ENCODE measurements at regions of chr2 and their contacts with region 1.

Region 1: GRCh38 chr2:129396980-129397599 is 582.4 kb upstream of the RAB6C start:
- DNase-seq: peak; percentile 54
- H3K4me3 ChIP-seq: no peak overlapping the region
- H3K27ac ChIP-seq: no peak overlapping the region
- H3K4me1 ChIP-seq: no peaks in the 10 kb centered on the region
- H3K27me3 ChIP-seq: no peaks in the 10 kb centered on the region
- CTCF ChIP-seq: peak; percentile 82

Region 2: DNA sequence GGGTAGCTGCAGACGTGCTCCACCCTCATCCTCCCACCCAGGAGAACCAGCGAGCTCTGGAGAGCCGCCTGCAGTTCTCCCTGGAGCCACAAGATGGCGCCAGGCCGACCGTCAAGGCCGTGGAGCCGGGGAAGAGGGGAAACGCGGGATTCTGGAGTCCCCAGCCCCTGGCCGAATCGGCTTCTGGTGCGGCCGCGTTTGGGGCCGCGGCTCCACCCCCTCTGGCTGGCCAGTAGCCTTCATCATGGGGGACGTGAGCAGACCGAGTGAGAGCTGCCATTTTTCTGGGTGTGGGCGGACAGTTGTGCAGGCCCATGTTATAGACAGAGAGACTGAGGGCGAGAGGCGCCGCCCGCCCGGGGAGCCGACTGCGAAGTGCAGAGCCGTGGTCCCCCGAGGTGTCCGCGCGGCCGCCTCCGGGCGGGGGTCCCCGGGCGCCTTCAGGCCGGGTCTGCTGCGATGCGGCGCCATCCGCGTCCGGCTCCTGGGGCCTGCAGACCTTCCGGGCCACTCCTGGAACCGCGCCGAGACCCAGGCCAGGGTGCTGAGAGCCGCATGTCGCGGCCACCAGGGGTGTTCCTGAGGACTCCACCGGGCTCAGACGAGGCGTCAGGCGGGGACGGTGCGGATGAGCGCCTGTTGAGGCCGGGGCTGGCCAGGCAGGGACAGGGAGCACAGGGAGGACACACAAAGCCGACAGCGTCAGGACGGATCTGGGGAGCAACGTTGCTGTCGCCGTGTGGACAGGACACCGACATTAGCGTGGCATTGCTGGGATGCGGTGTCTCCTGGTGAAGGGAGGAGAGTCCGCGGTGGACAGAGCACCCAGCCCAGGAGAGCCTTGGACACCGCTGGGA is 660.2 kb before region 1 on chr2:
- CTCF ChIA-PET with region 1: no interaction called
- POLR2A ChIA-PET with region 1: no interaction called
- intact Hi-C with region 1: loop called (anchors 10 kb)
- DNase-seq: peak; percentile 90
- H3K4me3 ChIP-seq: no peak overlapping the region
- H3K27ac ChIP-seq: no peak overlapping the region
- H3K4me1 ChIP-seq: peaks cover 32% of the 10 kb centered on the region
- H3K27me3 ChIP-seq: no peaks in the 10 kb centered on the region
- CTCF ChIP-seq: peak; percentile 99

Region 3: GRCh38 chr2:129191235-129191929 is 205.7 kb before region 1 on chr2:
- CTCF ChIA-PET with region 1: no interaction called
- POLR2A ChIA-PET with region 1: no interaction called
- intact Hi-C with region 1: loop called (anchors 2 kb)
- DNase-seq: no peak
- H3K4me3 ChIP-seq: no peak overlapping the region
- H3K27ac ChIP-seq: no peak overlapping the region
- H3K4me1 ChIP-seq: no peaks in the 10 kb centered on the region
- H3K27me3 ChIP-seq: peaks cover under 1% of the 10 kb centered on the region
- CTCF ChIP-seq: no peak

Region 4: DNA sequence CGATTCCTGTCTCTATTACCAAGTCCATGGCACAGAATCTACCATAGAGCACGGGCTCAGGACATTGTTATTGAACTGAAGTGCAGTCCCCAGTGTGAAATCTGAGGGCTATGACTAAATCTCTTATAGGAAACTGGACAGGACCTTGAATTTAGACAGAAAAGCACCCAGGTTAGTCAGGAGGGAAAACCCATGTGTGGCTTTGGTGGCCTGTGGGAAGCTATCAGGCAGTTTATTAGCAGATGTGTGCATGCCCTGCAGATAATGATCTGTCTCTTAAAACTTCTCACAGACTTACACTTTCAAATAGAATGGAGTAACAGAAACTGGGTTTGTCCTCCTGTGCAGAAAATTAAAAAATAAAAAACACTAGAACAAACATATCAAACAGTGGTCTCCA is 27.7 kb before region 1 on chr2:
- CTCF ChIA-PET with region 1: interaction called, 14 read pairs
- POLR2A ChIA-PET with region 1: no interaction called
- intact Hi-C with region 1: no loop called
- DNase-seq: no peak
- H3K4me3 ChIP-seq: no peak overlapping the region
- H3K27ac ChIP-seq: no peak overlapping the region
- H3K4me1 ChIP-seq: no peaks in the 10 kb centered on the region
- H3K27me3 ChIP-seq: no peaks in the 10 kb centered on the region
- CTCF ChIP-seq: no peak

Region 5: GRCh38 chr2:129849559-129850160 is 452.6 kb after region 1 on chr2:
- CTCF ChIA-PET with region 1: no interaction called
- POLR2A ChIA-PET with region 1: no interaction called
- intact Hi-C with region 1: loop called (anchors 10 kb)
- DNase-seq: peak; percentile 76
- H3K4me3 ChIP-seq: no peak overlapping the region
- H3K27ac ChIP-seq: no peak overlapping the region
- H3K4me1 ChIP-seq: no peaks in the 10 kb centered on the region
- H3K27me3 ChIP-seq: no peaks in the 10 kb centered on the region
- CTCF ChIP-seq: peak; percentile 75